Caco-2 (cell line): ENCODE measurements at regions of chr1 and their contacts with region 1.

Region 1: DNA sequence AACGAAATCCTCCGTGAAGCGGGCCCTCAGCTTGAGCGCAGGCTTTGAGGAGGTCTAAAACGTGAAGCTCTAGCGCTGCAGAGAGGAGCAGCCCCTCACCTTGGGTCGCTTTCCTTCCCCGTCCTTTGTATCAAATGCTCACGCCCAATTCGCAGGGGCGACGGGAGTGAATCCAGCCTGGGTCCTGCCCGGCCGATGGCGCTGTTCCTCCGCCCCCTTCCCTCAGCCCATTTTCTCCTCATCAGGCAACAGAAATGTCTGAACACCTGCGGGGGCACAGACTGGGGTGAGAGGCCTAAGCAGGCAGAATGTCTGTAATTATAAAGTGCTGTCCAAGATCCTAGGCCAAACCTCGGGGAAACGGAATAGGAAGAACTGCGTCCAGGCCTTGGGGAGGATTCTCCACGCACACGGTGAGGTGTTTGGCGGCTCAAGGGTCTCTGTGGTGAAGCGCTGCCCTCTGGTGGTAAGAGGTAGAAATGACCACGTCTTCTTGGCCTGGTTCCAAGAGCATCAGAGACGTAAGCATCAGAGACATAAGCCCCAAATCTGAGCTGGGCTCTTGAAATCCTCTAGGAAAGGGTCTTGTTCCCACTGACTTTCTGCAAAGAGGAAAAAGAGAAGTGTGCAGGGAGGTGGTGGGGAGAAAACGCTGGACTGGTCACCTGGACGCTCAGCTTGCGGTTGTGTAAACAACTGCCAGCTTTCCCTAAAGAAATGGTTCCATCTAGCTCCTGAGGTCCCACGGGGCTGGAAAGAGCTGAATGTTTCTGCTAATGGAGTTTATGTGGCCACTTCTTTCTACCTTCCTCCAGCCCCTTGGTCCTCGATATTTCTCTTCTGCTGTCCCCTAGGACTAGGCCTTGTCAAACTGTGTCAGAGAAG is 92.1 kb upstream of the CD53 start:
- DNase-seq: peak; percentile 43 to 46
- H3K4me3 ChIP-seq: no peak overlapping the region
- H3K4me3 Mint-ChIP-seq: no peak overlapping the region
- H3K27ac Mint-ChIP-seq: no peak overlapping the region
- H3K4me1 ChIP-seq: no peaks in the 10 kb centered on the region
- H3K4me1 Mint-ChIP-seq: no peaks in the 10 kb centered on the region
- H3K27me3 ChIP-seq: no peaks in the 10 kb centered on the region
- H3K27me3 Mint-ChIP-seq: peaks cover 12% of the 10 kb centered on the region
- CTCF ChIP-seq: peak; percentile 43 to 52

Region 2: GRCh38 chr1:110524311-110525251 is 256.3 kb before region 1 on chr1:
- CTCF ChIA-PET with region 1: no interaction called
- POLR2A ChIA-PET with region 1: no interaction called
- intact Hi-C with region 1: loop called (anchors 10 kb)
- DNase-seq: peak; percentile 42 to 44
- H3K4me3 ChIP-seq: no peak overlapping the region
- H3K4me3 Mint-ChIP-seq: no peak overlapping the region
- H3K27ac Mint-ChIP-seq: no peak overlapping the region
- H3K4me1 ChIP-seq: no peaks in the 10 kb centered on the region
- H3K4me1 Mint-ChIP-seq: no peaks in the 10 kb centered on the region
- H3K27me3 ChIP-seq: no peaks in the 10 kb centered on the region
- H3K27me3 Mint-ChIP-seq: peaks cover 9% of the 10 kb centered on the region
- CTCF ChIP-seq: peak; percentile 57 to 64

Region 3: GRCh38 chr1:110630839-110631663 is 149.8 kb before region 1 on chr1:
- CTCF ChIA-PET with region 1: interaction called, 3 read pairs
- POLR2A ChIA-PET with region 1: no interaction called
- intact Hi-C with region 1: loop called (anchors 1 kb)
- DNase-seq: peak; percentile 68 to 76
- H3K4me3 ChIP-seq: no peak overlapping the region
- H3K4me3 Mint-ChIP-seq: no peak overlapping the region
- H3K27ac Mint-ChIP-seq: no peak overlapping the region
- H3K4me1 ChIP-seq: no peaks in the 10 kb centered on the region
- H3K4me1 Mint-ChIP-seq: no peaks in the 10 kb centered on the region
- H3K27me3 ChIP-seq: no peaks in the 10 kb centered on the region
- H3K27me3 Mint-ChIP-seq: peaks cover 12% of the 10 kb centered on the region
- CTCF ChIP-seq: peak; percentile 47 to 69

Region 4: DNA sequence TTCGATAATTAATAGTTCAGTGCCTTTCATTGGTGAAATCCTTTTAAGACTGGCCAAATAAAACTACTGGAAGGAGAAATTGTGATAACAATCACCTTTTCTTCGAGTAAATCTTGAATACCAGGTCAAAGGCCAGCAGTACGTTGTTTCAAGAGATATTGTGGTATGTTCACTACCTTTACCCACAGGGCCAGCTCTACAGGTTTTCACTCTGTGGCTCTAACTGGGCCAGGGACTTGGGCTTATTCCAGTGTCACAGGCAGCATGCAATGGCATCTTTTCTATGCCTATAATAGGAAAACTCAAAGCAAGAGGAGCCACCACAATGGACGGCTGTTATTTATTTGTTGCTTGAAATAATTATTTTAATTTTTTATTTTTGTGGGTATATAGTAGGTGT is 209.7 kb after region 1 on chr1:
- CTCF ChIA-PET with region 1: interaction called, 4 read pairs
- POLR2A ChIA-PET with region 1: no interaction called
- intact Hi-C with region 1: loop called (anchors 5 kb)
- DNase-seq: no peak
- H3K4me3 ChIP-seq: no peak overlapping the region
- H3K4me3 Mint-ChIP-seq: no peak overlapping the region
- H3K27ac Mint-ChIP-seq: no peak overlapping the region
- H3K4me1 ChIP-seq: no peaks in the 10 kb centered on the region
- H3K4me1 Mint-ChIP-seq: peaks cover 7% of the 10 kb centered on the region
- H3K27me3 ChIP-seq: no peaks in the 10 kb centered on the region
- H3K27me3 Mint-ChIP-seq: peaks cover 7% of the 10 kb centered on the region
- CTCF ChIP-seq: no peak